OCI-LY7 (cell line): ENCODE measurements at regions of chr4 and their contacts with region 1.

Region 1: DNA sequence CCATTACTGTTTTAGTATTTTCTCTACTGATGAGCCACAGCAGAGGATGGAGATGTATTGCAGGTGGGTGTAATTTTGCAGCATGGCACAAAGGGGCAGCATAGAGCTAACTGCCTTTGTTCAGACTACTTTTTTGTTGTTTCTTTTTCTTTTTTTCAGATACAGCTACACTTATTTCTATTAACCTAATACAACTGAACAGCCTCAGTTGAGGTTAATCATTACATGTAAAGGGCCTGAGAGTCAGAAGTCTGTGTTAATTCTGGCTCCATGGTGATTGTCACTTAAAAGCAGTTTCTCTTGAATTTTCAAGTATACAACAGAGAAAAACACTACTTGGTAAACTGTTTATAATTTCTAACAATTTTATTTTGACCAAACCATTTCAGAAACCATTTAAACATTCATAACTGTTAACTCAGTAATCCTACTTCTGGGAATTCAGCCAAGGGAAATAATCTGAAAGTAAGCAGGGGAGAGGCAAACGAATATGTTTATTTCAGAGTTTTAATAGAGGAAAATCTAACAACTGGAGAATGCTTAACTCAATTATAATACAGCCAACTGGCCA is 13.9 kb upstream of the PPEF2 start:
- DNase-seq: peak; percentile 50
- H3K4me3 ChIP-seq: no peak overlapping the region
- H3K27ac ChIP-seq: no peak overlapping the region
- H3K4me1 ChIP-seq: no peaks in the 10 kb centered on the region
- CTCF ChIP-seq: peak; percentile 96

Region 2: DNA sequence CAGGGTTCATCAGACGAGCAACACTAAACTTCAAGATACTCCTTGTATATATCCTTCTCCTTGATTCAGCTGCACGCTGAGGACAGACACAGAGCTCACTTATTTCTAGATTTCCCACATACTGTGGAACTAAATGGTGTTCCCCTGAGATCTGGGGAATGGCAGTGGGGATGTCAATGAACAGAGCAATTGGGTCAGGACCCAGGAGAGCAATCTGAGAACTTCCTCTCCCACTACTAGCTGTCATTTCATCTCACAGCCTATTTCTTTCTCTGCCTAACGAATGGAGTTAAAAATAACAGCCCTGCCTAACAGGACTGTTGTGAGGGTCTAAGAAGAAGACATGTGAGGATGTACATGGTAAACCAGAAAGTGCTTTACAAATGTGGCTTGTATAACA is 14.0 kb after region 1 on chr4:
- CTCF ChIA-PET with region 1: no interaction called
- POLR2A ChIA-PET with region 1: no interaction called
- intact Hi-C with region 1: no loop called
- DNase-seq: no peak
- H3K4me3 ChIP-seq: no peak overlapping the region
- H3K27ac ChIP-seq: no peak overlapping the region
- H3K4me1 ChIP-seq: no peaks in the 10 kb centered on the region
- CTCF ChIP-seq: no peak

Region 3: GRCh38 chr4:75940692-75941253 is 24.6 kb after region 1 on chr4 and contains the start of gene NAAA:
- CTCF ChIA-PET with region 1: interaction called, 3 read pairs
- POLR2A ChIA-PET with region 1: no interaction called
- intact Hi-C with region 1: loop called (anchors 2 kb)
- DNase-seq: peak; percentile 81
- H3K4me3 ChIP-seq: peak within 1 kb of the TSS; percentile 76
- H3K27ac ChIP-seq: peak within 1 kb of the TSS; percentile 41
- H3K4me1 ChIP-seq: peaks cover 16% of the 10 kb centered on the region
- CTCF ChIP-seq: peak; percentile 52
- total RNA-seq, gene NAAA: 21.5 and 29.9 TPM in 2 replicates

Region 4: GRCh38 chr4:76002176-76002575 is 86.0 kb after region 1 on chr4:
- CTCF ChIA-PET with region 1: no interaction called
- POLR2A ChIA-PET with region 1: no interaction called
- intact Hi-C with region 1: no loop called
- DNase-seq: no peak
- H3K4me3 ChIP-seq: no peak overlapping the region
- H3K27ac ChIP-seq: no peak overlapping the region
- H3K4me1 ChIP-seq: no peaks in the 10 kb centered on the region
- CTCF ChIP-seq: no peak